ENCODE measurements at regions of chr16 and their contacts with region 1.

Region 1: GRCh38 chr16:58020628-58021139 is 4.9 kb upstream of the MMP15 start:
- DNase-seq: peak; percentile 58 to 71 (median 61)
- ATAC-seq: no peak
- H3K4me3 ChIP-seq: no peak overlapping the region
- H3K27ac ChIP-seq: no peak overlapping the region
- H3K4me1 ChIP-seq: peaks cover 0 to 25% (median 9%) of the 10 kb centered on the region in 4 donors
- H3K27me3 ChIP-seq: no peaks in the 10 kb centered on the region
- CTCF ChIP-seq: peak; percentile 70 to 81 (median 74)
- POLR2A ChIP-seq: no peak

Region 2: DNA sequence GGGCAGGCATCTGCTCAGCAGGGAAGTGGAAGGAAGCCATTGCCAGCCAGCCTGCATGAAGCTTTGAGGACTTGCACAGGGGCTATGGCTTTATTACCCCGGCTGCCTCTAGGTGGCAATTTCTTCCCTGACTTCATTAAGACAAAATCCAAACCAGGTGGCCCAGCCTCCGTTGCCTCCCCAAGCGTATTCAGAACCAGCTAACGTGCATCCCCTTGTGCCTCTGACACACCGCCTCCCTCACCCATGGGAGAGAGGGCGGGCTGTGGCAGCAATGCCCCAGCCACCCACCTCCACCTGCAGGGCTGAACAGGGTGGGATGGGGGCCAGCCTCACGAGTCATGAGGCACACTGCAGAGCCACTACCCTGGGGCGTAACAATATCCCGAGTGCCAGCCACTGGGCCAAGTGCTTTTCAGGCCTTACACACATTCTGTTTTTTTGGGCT is 225.2 kb before region 1 on chr16:
- intact Hi-C with region 1: no loop called
- DNase-seq: peak in 1 of 3 donors; percentile 67
- ATAC-seq: peak in 2 of 4 donors; percentile 1 to 7
- H3K4me3 ChIP-seq: no peak overlapping the region
- H3K27ac ChIP-seq: peak overlapping the region in 1 of 3 donors; percentile 29
- H3K4me1 ChIP-seq: peaks cover 0 to 57% (median 28%) of the 10 kb centered on the region in 4 donors
- H3K27me3 ChIP-seq: no peaks in the 10 kb centered on the region
- CTCF ChIP-seq: peak; percentile 33 to 50 (median 47)
- POLR2A ChIP-seq: peak; percentile 20

Region 3: DNA sequence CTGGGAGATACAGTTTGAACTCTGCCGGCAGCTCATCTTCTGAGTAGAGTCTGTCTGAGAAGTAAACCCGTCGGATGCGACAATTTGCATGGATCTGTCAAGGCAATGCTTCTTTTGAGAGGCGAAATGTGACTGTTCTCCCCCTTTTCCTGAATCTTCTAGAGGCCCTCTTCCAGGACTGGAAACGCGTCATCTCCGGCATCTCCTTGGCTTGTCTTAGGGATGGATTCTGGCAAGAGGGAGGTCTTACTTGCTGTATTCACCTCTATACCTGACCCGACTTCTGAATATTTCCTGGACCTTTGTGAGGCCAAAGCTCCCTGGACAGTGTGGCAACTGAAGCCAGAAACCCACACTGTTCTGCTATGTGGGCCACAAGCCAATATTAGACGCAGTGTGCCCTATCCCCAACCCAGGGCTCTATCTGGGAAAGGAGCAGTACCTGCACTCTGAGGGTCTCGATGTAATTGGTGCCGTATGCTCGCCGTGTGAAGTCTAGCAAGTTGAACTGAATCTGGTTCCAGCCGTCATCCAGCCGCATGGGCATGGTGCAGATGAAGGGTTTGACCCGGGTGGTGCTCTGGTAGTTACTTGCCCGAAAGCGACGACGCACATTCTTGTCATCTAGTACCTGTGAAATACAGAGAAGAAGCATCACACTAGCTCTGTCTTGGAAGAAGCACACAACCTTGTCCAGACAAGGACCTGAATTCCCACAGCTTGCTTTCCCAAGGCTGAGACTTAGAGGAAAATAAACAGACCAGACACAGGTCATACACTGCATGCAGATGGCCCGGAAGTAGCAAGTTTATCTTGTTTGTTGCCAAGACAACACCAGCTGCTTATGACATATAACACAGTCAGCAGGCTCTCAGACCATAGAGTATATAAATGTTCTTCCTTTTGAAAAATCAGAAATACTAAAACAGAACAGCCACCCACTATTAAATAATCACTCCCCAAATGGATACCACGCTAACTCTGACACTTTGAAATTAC is 94.4 kb after region 1 on chr16:
- intact Hi-C with region 1: loop called (anchors 5 kb)
- DNase-seq: no peak
- ATAC-seq: peak; percentile 50 to 65 (median 59)
- H3K4me3 ChIP-seq: no peak overlapping the region
- H3K27ac ChIP-seq: peak overlapping the region in 1 of 3 donors; percentile 8
- H3K4me1 ChIP-seq: peaks cover 0 to 21% (median 11%) of the 10 kb centered on the region in 4 donors
- H3K27me3 ChIP-seq: no peaks in the 10 kb centered on the region
- CTCF ChIP-seq: no peak
- POLR2A ChIP-seq: no peak

Region 4: GRCh38 chr16:58124601-58124915 is 103.9 kb after region 1 on chr16:
- intact Hi-C with region 1: loop called (anchors 5 kb)
- DNase-seq: no peak
- ATAC-seq: no peak
- H3K4me3 ChIP-seq: no peak overlapping the region
- H3K27ac ChIP-seq: no peak overlapping the region
- H3K4me1 ChIP-seq: peaks cover 0 to 75% (median 33%) of the 10 kb centered on the region in 4 donors
- H3K27me3 ChIP-seq: no peaks in the 10 kb centered on the region
- CTCF ChIP-seq: no peak
- POLR2A ChIP-seq: no peak

Measured in right lobe of liver (tissue), 6 donors.